ENCODE measurements at regions of chr16 and their contacts with region 1.

Region 1: GRCh38 chr16:69796351-69797118 is 34.4 kb downstream of the WWP2 start:
- DNase-seq: peak in 6 of 9 donors; percentile 16 to 40 (median 32)
- ATAC-seq: peak; percentile 83
- H3K4me3 ChIP-seq: no peak overlapping the region
- H3K4me3 Mint-ChIP-seq: no peak overlapping the region
- H3K27ac ChIP-seq: no peak overlapping the region
- H3K27ac Mint-ChIP-seq: no peak overlapping the region
- H3K4me1 ChIP-seq: no peaks in the 10 kb centered on the region
- H3K4me1 Mint-ChIP-seq: peaks cover 0 to 10% (median 0%) of the 10 kb centered on the region in 7 donors
- H3K27me3 ChIP-seq: no peaks in the 10 kb centered on the region
- H3K27me3 Mint-ChIP-seq: no peaks in the 10 kb centered on the region

Region 2: DNA sequence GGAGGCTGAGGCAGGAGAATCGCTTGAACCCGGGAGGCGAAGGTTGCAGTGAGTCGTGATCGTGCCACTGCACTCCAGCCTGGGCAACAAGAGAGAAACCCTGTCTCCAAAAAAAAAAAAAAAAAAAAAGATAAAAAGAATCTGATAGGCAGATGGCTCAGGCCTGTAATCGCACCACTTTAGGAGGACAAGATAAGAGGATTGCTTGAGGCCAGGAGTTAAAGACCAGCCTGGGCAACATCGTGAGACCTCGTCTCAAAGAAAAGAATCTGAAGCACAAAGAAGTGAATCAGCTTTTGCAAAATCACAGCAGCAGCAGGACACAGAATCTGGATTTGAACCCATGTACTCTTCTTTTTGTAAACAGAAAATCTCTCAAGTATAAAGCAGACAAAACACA is 49.4 kb before region 1 on chr16:
- CTCF ChIA-PET with region 1: no interaction called
- POLR2A ChIA-PET with region 1: no interaction called
- intact Hi-C with region 1: no loop called
- DNase-seq: no peak
- ATAC-seq: no peak
- H3K4me3 ChIP-seq: no peak overlapping the region
- H3K4me3 Mint-ChIP-seq: no peak overlapping the region
- H3K27ac ChIP-seq: no peak overlapping the region
- H3K27ac Mint-ChIP-seq: peak overlapping the region in 2 of 9 donors; percentile 9 to 78
- H3K4me1 ChIP-seq: no peaks in the 10 kb centered on the region
- H3K4me1 Mint-ChIP-seq: peaks cover 2 to 9% (median 5%) of the 10 kb centered on the region in 7 donors
- H3K27me3 ChIP-seq: no peaks in the 10 kb centered on the region
- H3K27me3 Mint-ChIP-seq: no peaks in the 10 kb centered on the region

Region 3: DNA sequence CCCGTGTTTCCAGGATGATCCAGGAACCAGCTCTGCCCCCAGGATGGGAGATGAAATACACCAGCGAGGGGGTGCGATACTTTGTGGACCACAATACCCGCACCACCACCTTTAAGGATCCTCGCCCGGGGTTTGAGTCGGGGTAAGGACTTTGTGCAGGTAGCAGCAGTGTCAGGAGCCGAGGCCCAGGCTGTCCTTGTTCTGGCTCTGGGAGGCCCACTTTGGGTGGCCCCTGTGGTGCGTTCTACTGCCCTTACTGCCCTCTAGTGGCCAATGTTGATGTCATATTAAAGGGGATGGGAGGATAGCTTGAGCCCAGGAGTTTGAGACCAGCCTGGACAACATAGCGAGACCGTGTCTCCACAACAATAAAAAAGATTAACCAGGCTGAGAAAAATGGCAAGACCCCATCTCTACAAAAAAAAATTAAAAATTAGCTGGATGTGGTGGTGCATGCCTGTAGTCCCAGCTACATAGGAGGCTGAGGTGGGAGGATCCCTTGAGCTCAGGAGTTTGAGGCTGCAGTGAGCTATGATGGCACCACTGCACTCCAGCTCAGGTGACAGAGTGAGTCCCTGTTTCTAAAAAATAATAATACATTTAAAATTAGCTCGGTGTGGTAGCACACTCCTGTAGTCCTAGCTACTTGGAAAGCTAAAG is 133.7 kb after region 1 on chr16:
- CTCF ChIA-PET with region 1: interaction called, 6 read pairs
- POLR2A ChIA-PET with region 1: no interaction called
- intact Hi-C with region 1: loop called (anchors 1 kb)
- DNase-seq: peak in 8 of 9 donors; percentile 15 to 55 (median 42)
- ATAC-seq: peak; percentile 81
- H3K4me3 ChIP-seq: no peak overlapping the region
- H3K4me3 Mint-ChIP-seq: no peak overlapping the region
- H3K27ac ChIP-seq: no peak overlapping the region
- H3K27ac Mint-ChIP-seq: peak overlapping the region in 1 of 9 donors; percentile 33
- H3K4me1 ChIP-seq: no peaks in the 10 kb centered on the region
- H3K4me1 Mint-ChIP-seq: peaks cover 0 to 3% (median 0%) of the 10 kb centered on the region in 7 donors
- H3K27me3 ChIP-seq: no peaks in the 10 kb centered on the region
- H3K27me3 Mint-ChIP-seq: no peaks in the 10 kb centered on the region